Heart right ventricle (tissue), 16 donors: ENCODE measurements at regions of chr10 and their contacts with region 1.

Region 1: GRCh38 chr10:7383442-7383841 is 27.4 kb downstream of the SFMBT2 start:
- DNase-seq: no peak
- ATAC-seq: no peak
- H3K4me3 ChIP-seq: no peak overlapping the region
- H3K27ac ChIP-seq: no peak overlapping the region
- H3K4me1 ChIP-seq: peaks cover 0 to 35% (median 10%) of the 10 kb centered on the region in 9 donors
- H3K27me3 ChIP-seq: no peaks in the 10 kb centered on the region
- CTCF ChIP-seq: no peak

Region 2: GRCh38 chr10:7285522-7286322 is 97.7 kb before region 1 on chr10:
- intact Hi-C with region 1: no loop called
- DNase-seq: no peak
- ATAC-seq: no peak
- H3K4me3 ChIP-seq: no peak overlapping the region
- H3K27ac ChIP-seq: no peak overlapping the region
- H3K4me1 ChIP-seq: peaks cover 0 to 10% (median 0%) of the 10 kb centered on the region in 9 donors
- H3K27me3 ChIP-seq: no peaks in the 10 kb centered on the region
- CTCF ChIP-seq: no peak

Region 3: GRCh38 chr10:7345717-7346116 is 37.7 kb before region 1 on chr10:
- intact Hi-C with region 1: loop called in 1 of 10 experiments (anchors 5 kb)
- DNase-seq: peak in 1 of 2 donors; percentile 40
- ATAC-seq: peak; percentile 74 to 96 (median 87)
- H3K4me3 ChIP-seq: peak overlapping the region in 2 of 10 donors; percentile 5 to 6
- H3K27ac ChIP-seq: peak overlapping the region; percentile 30 to 83 (median 60)
- H3K4me1 ChIP-seq: peaks cover 4 to 31% (median 22%) of the 10 kb centered on the region in 9 donors
- H3K27me3 ChIP-seq: no peaks in the 10 kb centered on the region
- CTCF ChIP-seq: no peak

Region 4: DNA sequence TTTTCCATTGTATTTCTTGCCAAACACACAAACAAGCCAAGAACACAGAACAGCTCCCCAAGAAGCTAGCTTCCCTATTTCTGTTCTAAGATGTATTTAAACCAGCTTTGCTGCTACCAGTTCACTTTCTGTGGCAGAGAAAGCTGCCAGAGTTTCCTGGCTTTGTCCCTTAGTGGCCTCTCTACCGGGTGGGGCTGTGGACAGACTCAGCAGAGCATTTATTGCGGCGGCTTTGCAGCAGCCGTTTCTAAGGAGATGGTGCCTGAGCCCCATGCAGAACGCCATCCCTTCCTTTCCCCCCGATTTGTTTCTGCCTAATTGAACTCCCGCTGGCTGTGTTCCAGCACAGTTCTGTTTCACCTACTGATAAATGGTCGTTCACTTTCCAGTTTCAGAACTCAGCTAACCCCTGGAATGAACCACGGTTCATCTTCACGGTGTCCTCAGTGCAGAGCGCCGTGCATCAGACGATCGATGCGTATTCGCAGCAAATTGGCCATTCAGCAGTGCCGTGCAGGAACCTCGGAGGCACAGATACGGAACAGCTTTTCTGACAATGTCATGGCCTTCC is 61.2 kb after region 1 on chr10:
- intact Hi-C with region 1: no loop called
- DNase-seq: no peak
- ATAC-seq: peak in 2 of 8 donors; percentile 25 to 53
- H3K4me3 ChIP-seq: no peak overlapping the region
- H3K27ac ChIP-seq: peak overlapping the region in 1 of 10 donors; percentile 4
- H3K4me1 ChIP-seq: peaks cover 0 to 18% (median 0%) of the 10 kb centered on the region in 9 donors
- H3K27me3 ChIP-seq: peaks cover 0 to 27% (median 19%) of the 10 kb centered on the region in 7 donors
- CTCF ChIP-seq: no peak

Region 5: DNA sequence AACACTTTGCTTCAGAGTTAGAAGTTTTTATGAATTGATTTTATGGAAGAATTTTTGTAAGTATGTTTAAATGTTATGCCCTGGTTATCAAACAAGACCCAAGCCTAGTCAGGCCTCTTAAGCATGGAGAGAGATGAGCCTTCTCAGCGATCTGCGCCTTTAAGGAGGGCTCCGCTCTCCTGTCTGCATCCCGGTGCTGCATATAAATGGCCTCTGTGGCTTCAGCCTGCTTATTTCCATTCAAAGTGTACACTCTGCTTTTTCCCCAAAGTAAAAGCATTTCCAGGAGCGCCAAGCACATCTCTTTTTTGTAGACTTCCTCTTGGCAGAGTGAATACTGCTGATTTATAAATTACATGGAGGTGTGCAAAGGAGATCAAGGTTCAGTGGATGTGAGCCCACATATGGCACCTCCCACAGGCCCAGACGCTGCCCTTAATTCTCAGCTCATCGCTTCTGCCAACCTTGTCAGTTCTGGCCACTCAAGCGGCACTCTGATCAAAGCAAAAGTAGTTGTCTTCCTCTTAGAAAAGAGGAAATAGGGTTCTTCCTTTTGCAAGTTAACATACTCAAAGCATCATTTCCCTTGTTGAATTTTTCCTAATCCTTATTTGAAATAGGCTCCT is 97.4 kb after region 1 on chr10:
- intact Hi-C with region 1: no loop called
- DNase-seq: no peak
- ATAC-seq: peak in 1 of 8 donors; percentile 47
- H3K4me3 ChIP-seq: no peak overlapping the region
- H3K27ac ChIP-seq: peak overlapping the region in 1 of 10 donors; percentile 76
- H3K4me1 ChIP-seq: peaks cover 0 to 57% (median 9%) of the 10 kb centered on the region in 9 donors
- H3K27me3 ChIP-seq: peaks cover 0 to 11% (median 0%) of the 10 kb centered on the region in 7 donors
- CTCF ChIP-seq: no peak